Natural killer cell (primary cell): ENCODE measurements at regions of chr1 and their contacts with region 1.

Region 1: GRCh38 chr1:1291548-1292441 is 11.6 kb downstream of the SCNN1D start:
- DNase-seq: peak; percentile 56 to 84
- ATAC-seq: peak in 2 of 3 donors; percentile 77 to 82
- H3K4me3 ChIP-seq: no peak overlapping the region
- H3K4me3 Mint-ChIP-seq: no peak overlapping the region
- H3K27ac ChIP-seq: no peak overlapping the region
- H3K27ac Mint-ChIP-seq: no peak overlapping the region
- H3K4me1 ChIP-seq: no peaks in the 10 kb centered on the region
- H3K4me1 Mint-ChIP-seq: peaks cover 0 to 5% of the 10 kb centered on the region in 2 donors
- H3K27me3 ChIP-seq: no peaks in the 10 kb centered on the region
- H3K27me3 Mint-ChIP-seq: peaks cover 0 to 3% of the 10 kb centered on the region in 2 donors
- CTCF ChIP-seq: peak; percentile 57

Region 2: GRCh38 chr1:983799-984473 is 307.9 kb before region 1 on chr1:
- intact Hi-C with region 1: loop called (anchors 5 kb)
- DNase-seq: peak; percentile 63 to 78
- ATAC-seq: peak; percentile 68 to 98 (median 91)
- H3K4me3 ChIP-seq: no peak overlapping the region
- H3K4me3 Mint-ChIP-seq: no peak overlapping the region
- H3K27ac ChIP-seq: no peak overlapping the region
- H3K27ac Mint-ChIP-seq: no peak overlapping the region
- H3K4me1 ChIP-seq: no peaks in the 10 kb centered on the region
- H3K4me1 Mint-ChIP-seq: no peaks in the 10 kb centered on the region
- H3K27me3 ChIP-seq: no peaks in the 10 kb centered on the region
- H3K27me3 Mint-ChIP-seq: peaks cover 21 to 27% of the 10 kb centered on the region in 2 donors
- CTCF ChIP-seq: peak; percentile 97

Region 3: DNA sequence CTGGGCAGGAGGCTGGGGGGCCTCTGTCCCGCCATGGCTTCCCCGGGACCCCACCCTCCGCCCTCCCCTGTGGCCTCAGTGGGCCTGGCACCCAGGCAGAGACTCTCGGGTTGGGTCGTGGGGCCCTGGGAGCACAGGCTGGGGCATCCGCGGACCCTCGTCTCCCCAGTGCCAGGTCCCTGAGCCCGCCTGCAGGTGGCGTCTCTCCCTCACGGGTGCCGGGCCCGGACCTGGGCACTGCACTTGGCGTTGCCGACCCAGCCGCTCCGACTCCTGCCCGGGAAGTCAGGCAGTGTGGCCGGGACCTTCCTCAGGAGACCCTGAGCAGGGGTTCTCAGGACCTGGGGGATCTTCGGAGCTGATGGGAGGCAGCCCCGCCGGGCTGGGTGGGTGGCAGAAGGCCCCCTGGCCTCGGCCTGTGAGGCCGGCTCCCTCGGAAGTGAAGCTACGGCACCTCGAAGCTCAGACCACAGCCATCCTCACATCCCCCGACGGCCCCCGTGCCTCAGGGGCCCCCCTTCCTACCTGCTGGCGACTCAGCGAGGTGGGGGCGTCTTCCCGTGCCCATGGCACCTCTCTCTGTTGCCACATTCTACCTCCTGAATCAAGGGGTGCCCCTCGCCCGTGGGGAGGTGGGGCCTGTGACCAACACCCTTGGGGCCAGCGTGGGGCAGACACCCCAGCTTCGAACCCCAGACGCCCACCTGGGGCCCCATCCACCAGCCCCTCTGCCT is 169.6 kb before region 1 on chr1:
- intact Hi-C with region 1: loop called (anchors 2 kb)
- DNase-seq: peak; percentile 84 to 90
- ATAC-seq: peak; percentile 88 to 97 (median 94)
- H3K4me3 ChIP-seq: peak overlapping the region; percentile 6
- H3K4me3 Mint-ChIP-seq: peak overlapping the region; percentile 60
- H3K27ac ChIP-seq: no peak overlapping the region
- H3K27ac Mint-ChIP-seq: peak overlapping the region in 1 of 2 donors; percentile 79
- H3K4me1 ChIP-seq: peaks cover 17% of the 10 kb centered on the region
- H3K4me1 Mint-ChIP-seq: peaks cover 10 to 15% of the 10 kb centered on the region in 2 donors
- H3K27me3 ChIP-seq: peaks cover 2% of the 10 kb centered on the region
- H3K27me3 Mint-ChIP-seq: peaks cover 0 to 3% of the 10 kb centered on the region in 2 donors
- CTCF ChIP-seq: peak; percentile 87

Region 4: DNA sequence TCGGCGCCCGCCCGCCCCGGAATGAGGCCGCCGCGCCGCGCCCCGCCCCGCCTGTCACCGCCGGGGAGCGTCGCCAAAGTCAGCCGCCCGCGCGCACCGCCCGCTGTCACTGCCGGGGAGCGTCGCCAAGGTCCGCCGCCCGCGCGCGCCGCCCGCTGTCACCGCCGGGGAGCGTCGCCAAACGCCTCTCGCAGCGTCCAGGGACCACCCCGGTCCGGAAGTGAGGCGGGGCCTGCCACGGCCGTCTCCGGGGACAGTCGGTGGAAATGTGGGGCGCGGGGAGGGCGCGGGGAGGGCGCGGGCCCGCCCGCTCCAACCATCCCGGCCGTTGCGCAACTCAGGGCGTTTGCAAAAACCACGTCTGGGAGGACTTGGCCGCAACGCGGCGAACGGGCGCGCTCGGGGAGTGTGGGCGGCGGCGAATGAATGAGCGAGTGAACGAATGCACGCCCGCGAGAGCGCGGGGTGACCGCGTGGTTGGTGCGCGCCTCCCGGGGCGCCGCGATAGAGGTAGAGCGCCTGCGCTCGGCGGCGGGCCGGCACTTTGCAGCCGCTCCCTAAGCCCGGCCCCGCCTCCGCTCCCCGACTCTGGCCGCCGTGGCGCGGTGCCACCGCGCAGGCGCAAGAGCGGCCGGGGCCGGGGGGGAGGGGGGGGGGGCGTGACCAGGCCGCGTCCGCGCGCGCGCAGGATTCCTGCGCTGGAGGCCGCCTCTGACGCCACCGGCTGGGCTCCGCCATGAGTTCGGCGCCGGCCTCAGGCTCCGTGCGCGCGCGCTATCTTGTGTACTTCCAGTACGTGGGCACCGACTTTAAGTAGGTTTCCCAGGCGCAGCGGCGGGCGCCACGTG is 16.3 kb after region 1 on chr1 and contains the starts of genes ACAP3 and PUSL1:
- intact Hi-C with region 1: no loop called
- DNase-seq: peak; percentile 89 to 96
- ATAC-seq: peak; percentile 78 to 91 (median 79)
- H3K4me3 ChIP-seq: peak within 1 kb of the TSS; percentile 64
- H3K4me3 Mint-ChIP-seq: peak within 1 kb of the TSS; percentile 86
- H3K27ac ChIP-seq: peak within 1 kb of the TSS; percentile 85
- H3K27ac Mint-ChIP-seq: peak within 1 kb of the TSS; percentile 79 to 82
- H3K4me1 ChIP-seq: peaks cover 47% of the 10 kb centered on the region
- H3K4me1 Mint-ChIP-seq: peaks cover 6 to 26% of the 10 kb centered on the region in 2 donors
- H3K27me3 ChIP-seq: no peaks in the 10 kb centered on the region
- H3K27me3 Mint-ChIP-seq: no peaks in the 10 kb centered on the region
- CTCF ChIP-seq: no peak
- total RNA-seq, gene ACAP3: 56.1 to 59.7 (median 59.0) TPM
- total RNA-seq, gene PUSL1: 11.1 to 13.0 (median 12.9) TPM